Activated CD4-positive, alpha-beta memory T cell treated with anti-CD3 and anti-CD28 coated beads for 36 hours (primary cell): ENCODE measurements at regions of chr13 and their contacts with region 1.

Region 1: GRCh38 chr13:30114571-30115256 is 192.6 kb downstream of the KATNAL1 start:
- DNase-seq: peak; percentile 95
- H3K4me3 Mint-ChIP-seq: peak overlapping the region; percentile 74
- H3K27ac Mint-ChIP-seq: no peak overlapping the region
- H3K4me1 Mint-ChIP-seq: peaks cover 32% of the 10 kb centered on the region
- H3K27me3 Mint-ChIP-seq: peaks cover 1% of the 10 kb centered on the region

Region 2: DNA sequence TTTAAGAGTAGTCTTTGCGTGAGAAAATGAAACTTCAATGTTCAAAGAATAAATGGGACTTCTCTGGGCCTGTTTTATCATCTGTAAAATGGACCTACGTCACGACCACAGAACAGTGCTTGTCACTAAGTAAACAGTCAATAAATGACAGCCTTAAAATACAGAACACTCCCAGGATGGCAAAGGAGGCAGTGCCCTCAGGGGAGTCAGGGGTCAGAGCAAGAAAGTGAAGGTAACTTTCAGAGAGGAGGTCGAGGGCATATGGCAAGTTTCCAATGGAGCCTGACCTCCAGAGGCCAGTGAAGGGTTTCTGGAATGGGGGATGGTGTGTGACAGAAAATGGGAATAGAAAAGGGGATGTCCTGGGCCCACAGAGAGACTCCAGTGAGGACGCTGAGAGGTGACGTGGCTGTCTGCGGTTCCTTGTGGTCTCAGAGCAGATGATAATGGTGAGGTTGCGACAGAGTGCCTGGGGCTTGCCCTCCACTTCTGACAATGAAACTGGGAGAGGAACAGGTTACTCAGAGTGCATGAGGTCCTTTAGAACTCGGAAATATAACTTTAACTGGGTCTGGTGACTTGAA is 356.1 kb before region 1 on chr13:
- CTCF ChIA-PET with region 1: interaction called, 10 read pairs
- POLR2A ChIA-PET with region 1: interaction called, 3 read pairs
- intact Hi-C with region 1: no loop called
- DNase-seq: peak; percentile 86
- H3K4me3 Mint-ChIP-seq: peak overlapping the region; percentile 7
- H3K27ac Mint-ChIP-seq: no peak overlapping the region
- H3K4me1 Mint-ChIP-seq: peaks cover 18% of the 10 kb centered on the region
- H3K27me3 Mint-ChIP-seq: no peaks in the 10 kb centered on the region

Region 3: DNA sequence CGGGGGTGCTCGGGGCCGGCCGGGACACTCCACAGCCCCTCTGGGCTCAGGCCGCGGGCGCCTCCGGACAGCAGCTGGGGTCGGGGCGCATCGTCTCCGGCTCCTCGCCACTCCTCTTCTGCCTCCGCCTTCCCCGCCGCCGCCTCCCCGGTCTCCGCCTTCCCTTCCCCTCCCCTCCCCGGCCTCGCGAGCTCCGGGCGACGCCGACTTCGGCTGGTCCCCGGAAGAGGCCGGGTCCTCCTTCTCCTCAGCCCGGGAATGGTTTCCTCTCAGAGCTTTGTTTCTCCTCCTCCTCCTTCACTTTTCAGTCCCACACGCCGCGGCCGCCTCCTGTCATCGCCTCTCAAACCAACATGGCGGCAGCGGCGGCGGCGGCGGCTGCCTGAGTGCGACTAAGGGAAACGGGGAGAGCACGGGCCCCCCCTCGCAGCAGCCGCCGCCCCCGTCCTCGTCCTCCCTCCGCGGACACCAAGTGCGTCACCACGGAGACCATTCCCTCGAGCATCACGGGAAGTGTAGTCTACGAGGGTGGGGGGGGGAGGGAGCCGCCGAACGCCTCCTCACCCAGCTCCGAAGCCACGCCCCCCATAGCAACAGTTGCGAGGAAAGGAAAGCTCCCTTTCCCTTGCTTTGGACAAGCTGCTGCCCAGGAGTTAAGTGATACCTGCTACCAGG is 264.4 kb before region 1 on chr13 and contains the start of gene UBL3:
- CTCF ChIA-PET with region 1: interaction called, 151 read pairs
- POLR2A ChIA-PET with region 1: interaction called, 4 read pairs
- intact Hi-C with region 1: loop called (anchors 1 kb)
- DNase-seq: peak; percentile 97
- H3K4me3 Mint-ChIP-seq: peak within 1 kb of the TSS; percentile 90
- H3K27ac Mint-ChIP-seq: peak within 1 kb of the TSS; percentile 98
- H3K4me1 Mint-ChIP-seq: peaks cover 46% of the 10 kb centered on the region
- H3K27me3 Mint-ChIP-seq: no peaks in the 10 kb centered on the region
- total RNA-seq, gene UBL3: 15.3 to 15.5 TPM

Region 4: GRCh38 chr13:29954082-29955028 is 160.4 kb before region 1 on chr13:
- CTCF ChIA-PET with region 1: interaction called, 12 read pairs
- POLR2A ChIA-PET with region 1: no interaction called
- intact Hi-C with region 1: loop called (anchors 5 kb)
- DNase-seq: peak; percentile 66
- H3K4me3 Mint-ChIP-seq: peak overlapping the region; percentile 63
- H3K27ac Mint-ChIP-seq: peak overlapping the region; percentile 76
- H3K4me1 Mint-ChIP-seq: peaks cover 30% of the 10 kb centered on the region
- H3K27me3 Mint-ChIP-seq: no peaks in the 10 kb centered on the region

Region 5: DNA sequence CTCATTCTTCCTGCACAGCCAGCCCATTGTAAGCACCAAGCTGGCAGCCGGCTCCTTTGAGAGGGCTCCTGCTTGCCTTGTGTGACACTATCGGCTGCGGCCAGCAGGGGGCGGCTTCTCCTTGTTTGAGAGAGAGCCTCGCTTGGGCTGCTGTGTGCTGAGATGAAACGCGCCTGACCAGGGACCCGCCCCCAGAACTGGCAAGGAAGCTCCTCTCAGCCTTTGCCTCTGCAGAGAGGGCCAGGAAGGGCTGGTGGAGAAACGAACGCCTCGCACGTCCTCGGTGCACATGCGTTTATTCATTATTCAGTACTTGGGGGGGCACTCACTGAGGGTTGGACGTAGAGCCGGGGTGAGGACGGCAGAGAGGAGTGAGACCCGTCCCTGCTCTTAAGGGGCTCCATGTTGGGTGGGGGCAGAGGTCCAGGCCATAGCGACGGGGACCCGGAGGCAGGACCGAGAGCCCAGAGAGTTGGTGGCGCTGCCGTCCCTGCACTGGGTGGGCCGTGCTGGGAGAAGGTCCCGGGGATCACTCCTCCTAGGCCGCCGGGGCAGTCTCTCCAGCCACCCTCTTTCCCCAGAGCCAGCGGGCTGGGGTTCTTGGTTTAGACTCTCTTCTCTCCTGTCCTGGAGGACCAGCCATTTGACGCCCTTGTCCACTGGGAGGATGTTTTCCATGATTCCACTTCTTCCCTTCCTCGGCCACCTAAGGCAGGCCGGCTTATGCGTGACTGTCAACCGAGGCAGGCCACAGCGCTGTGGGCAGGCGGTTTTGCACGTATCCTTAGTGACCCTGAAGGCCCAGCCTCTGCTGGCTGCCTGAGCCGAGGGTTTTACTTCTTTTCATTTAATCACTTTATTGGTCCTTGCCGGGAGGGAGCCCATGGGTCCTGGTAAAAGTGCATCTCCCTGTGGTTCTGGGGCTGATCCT is 18.2 kb after region 1 on chr13:
- CTCF ChIA-PET with region 1: interaction called, 55 read pairs
- POLR2A ChIA-PET with region 1: interaction called, 4 read pairs
- intact Hi-C with region 1: no loop called
- DNase-seq: peak; percentile 98
- H3K4me3 Mint-ChIP-seq: no peak overlapping the region
- H3K27ac Mint-ChIP-seq: no peak overlapping the region
- H3K4me1 Mint-ChIP-seq: peaks cover 11% of the 10 kb centered on the region
- H3K27me3 Mint-ChIP-seq: no peaks in the 10 kb centered on the region